ENCODE measurements at regions of chr7 and their contacts with region 1.

Region 1: GRCh38 chr7:37311355-37311754 is 137.3 kb downstream of the ELMO1 start:
- DNase-seq: no peak
- ATAC-seq: no peak
- H3K4me3 Mint-ChIP-seq: no peak overlapping the region
- H3K27ac Mint-ChIP-seq: peak overlapping the region; percentile 89
- H3K4me1 Mint-ChIP-seq: peaks cover 37% of the 10 kb centered on the region
- H3K27me3 Mint-ChIP-seq: no peaks in the 10 kb centered on the region

Region 2: GRCh38 chr7:37342688-37343471 is 31.5 kb after region 1 on chr7:
- POLR2A ChIA-PET with region 1: interaction called, 11 read pairs
- DNase-seq: peak; percentile 70
- ATAC-seq: peak; percentile 80
- H3K4me3 Mint-ChIP-seq: peak overlapping the region; percentile 99
- H3K27ac Mint-ChIP-seq: peak overlapping the region; percentile 100
- H3K4me1 Mint-ChIP-seq: peaks cover 51% of the 10 kb centered on the region
- H3K27me3 Mint-ChIP-seq: no peaks in the 10 kb centered on the region

Region 3: DNA sequence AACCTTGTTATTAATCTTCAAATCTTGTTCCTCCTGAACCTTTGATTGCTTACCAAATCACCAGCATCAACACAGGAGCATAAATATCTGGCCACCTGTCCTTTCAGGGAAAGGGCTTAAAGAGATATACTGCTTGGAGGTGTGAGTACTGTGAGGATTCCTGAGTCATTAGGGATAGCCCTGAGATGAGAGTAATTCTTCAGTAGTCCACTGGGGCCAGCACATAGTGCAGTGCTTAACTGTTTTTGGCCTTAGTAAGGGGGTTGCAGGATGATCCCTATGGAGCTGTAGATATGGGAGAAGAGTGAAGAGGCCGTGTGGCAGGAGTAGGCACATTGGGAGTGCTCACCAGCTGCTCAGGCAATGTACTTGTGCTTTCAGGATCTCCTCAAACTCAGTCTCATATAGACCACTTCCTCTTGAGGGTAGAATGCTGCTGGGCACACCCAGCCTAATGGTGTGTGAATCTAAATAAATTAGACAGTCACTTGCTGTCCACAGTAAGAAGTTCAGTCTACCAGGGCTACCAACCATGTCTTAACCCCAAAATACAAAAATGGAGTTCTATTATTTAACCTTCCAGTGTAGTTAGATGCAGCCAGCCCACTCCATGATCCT is 345.7 kb after region 1 on chr7:
- POLR2A ChIA-PET with region 1: no interaction called
- DNase-seq: no peak
- ATAC-seq: peak; percentile 61
- H3K4me3 Mint-ChIP-seq: no peak overlapping the region
- H3K27ac Mint-ChIP-seq: no peak overlapping the region
- H3K4me1 Mint-ChIP-seq: peaks cover 6% of the 10 kb centered on the region
- H3K27me3 Mint-ChIP-seq: no peaks in the 10 kb centered on the region

Measured in activated naive CD8-positive, alpha-beta T cell treated with anti-CD3 and anti-CD28 coated beads, Interleukin-2, amount 10 ng/mL, durations not matched to agents 7 days and 5 days (primary cell).